PC-9 (cell line): ENCODE measurements at regions of chr1 and their contacts with region 1.

Region 1: DNA sequence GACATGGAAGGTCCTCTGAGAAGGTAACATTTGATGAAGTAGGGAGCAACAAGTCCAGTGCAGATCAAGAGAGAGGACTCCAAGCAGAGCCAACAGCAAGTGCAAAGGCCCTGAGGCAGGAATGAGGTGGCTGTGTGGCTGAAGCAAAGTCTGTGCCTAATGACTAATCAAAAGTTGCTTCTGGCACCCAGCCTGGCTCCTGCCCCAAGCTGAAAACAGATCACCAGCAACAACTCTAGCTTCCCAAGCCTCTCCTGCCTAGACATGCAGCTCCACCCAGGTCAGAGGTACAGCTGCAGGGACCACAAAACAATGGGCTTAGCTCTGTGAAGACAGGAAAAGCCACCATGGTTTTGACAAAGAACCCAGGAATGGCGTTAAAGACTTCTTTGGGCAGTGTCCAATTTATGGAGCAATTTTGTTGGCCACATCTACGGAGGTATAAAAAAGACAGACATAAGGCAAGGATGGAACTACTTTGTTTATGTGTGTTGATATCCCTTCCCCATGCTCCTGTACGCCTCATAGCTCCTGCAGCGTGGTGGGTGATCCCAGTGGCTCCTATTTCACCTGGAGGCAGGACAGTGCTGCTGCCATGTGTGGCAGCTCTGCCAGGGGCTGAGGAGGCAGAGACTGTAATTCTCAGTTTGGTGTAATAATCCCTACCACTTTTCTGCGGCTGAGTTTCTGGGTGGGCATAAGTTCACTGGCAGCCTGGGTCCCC is 26.4 kb upstream of the IGSF3 start:
- DNase-seq: peak; percentile 84 to 98
- H3K4me3 ChIP-seq: no peak overlapping the region; the same call in 1 of the 2 replicates
- H3K27ac ChIP-seq: peak overlapping the region; percentile 93
- H3K4me1 ChIP-seq: peaks cover 65% of the 10 kb centered on the region
- H3K27me3 ChIP-seq: no peaks in the 10 kb centered on the region
- CTCF ChIP-seq: no peak

Region 2: GRCh38 chr1:116654355-116654754 is 39.6 kb before region 1 on chr1:
- CTCF ChIA-PET with region 1: no interaction called
- POLR2A ChIA-PET with region 1: no interaction called
- intact Hi-C with region 1: loop called (anchors 10 kb)
- DNase-seq: no peak
- H3K4me3 ChIP-seq: no peak overlapping the region
- H3K27ac ChIP-seq: no peak overlapping the region
- H3K4me1 ChIP-seq: peaks cover 8% of the 10 kb centered on the region
- H3K27me3 ChIP-seq: no peaks in the 10 kb centered on the region
- CTCF ChIP-seq: no peak

Region 3: GRCh38 chr1:116667575-116668105 is 26.3 kb before region 1 on chr1 and contains the start of gene IGSF3:
- CTCF ChIA-PET with region 1: interaction called, 3 read pairs
- POLR2A ChIA-PET with region 1: interaction called, 25 read pairs
- intact Hi-C with region 1: loop called (anchors 2 kb)
- DNase-seq: peak; percentile 67 to 77
- H3K4me3 ChIP-seq: peak within 1 kb of the TSS; percentile 91
- H3K27ac ChIP-seq: peak within 1 kb of the TSS; percentile 42
- H3K4me1 ChIP-seq: peaks cover 39% of the 10 kb centered on the region
- H3K27me3 ChIP-seq: no peaks in the 10 kb centered on the region
- CTCF ChIP-seq: no peak
- total RNA-seq, gene IGSF3: 27.8 and 30.1 TPM in 2 replicates

Region 4: GRCh38 chr1:116754198-116754977 is 60.5 kb after region 1 on chr1 and contains the start of gene CD2:
- CTCF ChIA-PET with region 1: no interaction called
- POLR2A ChIA-PET with region 1: no interaction called
- intact Hi-C with region 1: no loop called
- DNase-seq: no peak
- H3K4me3 ChIP-seq: no peak within 1 kb of the TSS
- H3K27ac ChIP-seq: no peak within 1 kb of the TSS
- H3K4me1 ChIP-seq: no peaks in the 10 kb centered on the region
- H3K27me3 ChIP-seq: no peaks in the 10 kb centered on the region
- CTCF ChIP-seq: no peak
- total RNA-seq, gene CD2: not detected in 2 replicates

Region 5: DNA sequence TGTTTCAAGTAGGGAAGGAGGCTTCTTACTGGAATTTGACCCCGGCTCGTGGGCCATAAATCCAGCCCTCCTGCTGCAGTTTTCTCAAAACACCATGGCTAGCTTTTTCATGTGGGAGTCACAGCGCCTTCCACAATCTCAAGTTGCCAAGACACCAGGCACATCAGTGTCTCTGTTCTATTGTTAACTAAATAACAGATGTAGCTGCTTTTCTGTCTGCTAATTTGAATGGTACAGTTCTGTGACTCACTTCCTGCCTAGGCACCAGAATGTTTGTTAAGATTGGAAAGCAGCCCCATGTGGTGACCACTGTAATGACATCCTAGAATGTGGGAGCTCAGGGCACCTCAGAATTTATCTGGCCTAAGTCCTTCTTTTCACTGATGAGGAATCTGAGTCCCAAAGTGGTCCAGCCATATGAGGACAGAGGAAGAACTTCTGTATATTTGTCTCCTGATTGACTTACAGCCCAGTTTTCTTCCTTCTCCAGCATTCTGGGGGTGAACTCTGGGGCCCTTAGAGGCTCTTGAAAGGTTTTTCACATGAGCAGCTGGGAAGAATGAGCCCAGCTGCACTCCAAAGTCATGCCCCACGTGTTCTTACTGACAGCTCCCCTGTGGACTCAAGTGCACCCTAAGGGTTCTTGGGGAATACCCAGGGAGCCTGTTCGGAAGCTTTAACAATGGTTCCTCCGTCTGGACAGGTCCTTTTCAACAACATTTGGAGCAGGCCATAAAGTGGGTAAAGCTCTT is 400.1 kb after region 1 on chr1:
- CTCF ChIA-PET with region 1: no interaction called
- POLR2A ChIA-PET with region 1: interaction called, 11 read pairs
- intact Hi-C with region 1: no loop called
- DNase-seq: peak; percentile 31 to 47
- H3K4me3 ChIP-seq: no peak overlapping the region
- H3K27ac ChIP-seq: peak overlapping the region; percentile 35
- H3K4me1 ChIP-seq: peaks cover 13% of the 10 kb centered on the region; the same call in 1 of the 2 replicates
- H3K27me3 ChIP-seq: no peaks in the 10 kb centered on the region
- CTCF ChIP-seq: peak; percentile 65